Activated CD4-positive, alpha-beta memory T cell treated with anti-CD3 and anti-CD28 coated beads, Interleukin-2, amount 10 ng/mL, durations not matched to agents 7 days and 5 days (primary cell): ENCODE measurements at regions of chr3 and their contacts with region 1.

Region 1: DNA sequence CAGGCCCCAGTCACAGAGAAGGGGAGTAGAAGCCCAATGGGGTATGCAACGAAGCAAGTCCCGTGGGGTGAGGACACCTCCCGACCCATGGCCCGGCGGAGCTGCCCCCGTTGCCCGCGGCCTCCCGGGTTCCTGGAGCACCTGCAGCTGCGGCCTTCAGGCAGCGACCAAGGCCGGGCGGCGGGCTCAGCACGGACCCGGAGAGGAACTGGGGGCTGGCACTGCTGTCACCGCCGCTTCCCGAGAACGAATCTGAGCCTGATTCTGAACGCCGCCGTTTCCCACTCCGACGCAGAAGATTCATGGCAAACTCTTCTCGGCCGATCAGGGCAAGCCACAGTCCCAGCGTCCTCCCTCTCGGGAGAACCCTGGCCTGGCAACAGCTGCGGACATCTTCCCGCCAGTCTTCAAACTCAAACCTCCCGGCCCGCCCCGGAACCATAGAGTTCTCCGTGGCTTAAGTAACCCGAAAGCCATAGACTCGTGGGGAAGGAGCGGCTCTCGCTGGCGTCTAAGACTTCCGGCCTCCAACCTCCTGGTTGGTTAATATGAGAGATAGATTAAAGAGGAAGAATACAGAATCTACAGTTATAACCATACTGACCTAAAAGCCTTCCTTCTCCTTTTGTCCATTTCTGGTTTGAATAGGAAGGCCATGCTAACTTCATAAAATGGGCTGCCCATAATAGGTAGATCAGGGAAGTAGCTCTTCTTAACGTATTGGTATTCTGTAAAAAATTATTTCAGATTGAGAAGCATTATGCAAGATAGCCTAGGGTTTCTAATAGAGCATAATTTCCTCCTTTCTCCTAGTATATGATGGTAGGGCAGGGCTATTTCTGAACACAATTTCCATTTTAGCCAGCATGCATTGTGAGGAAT is at the start of gene POLQ:
- DNase-seq: peak; percentile 91
- H3K4me3 Mint-ChIP-seq: peak within 1 kb of the TSS; percentile 97
- H3K27ac Mint-ChIP-seq: peak within 1 kb of the TSS; percentile 86
- H3K4me1 Mint-ChIP-seq: peaks cover 44% of the 10 kb centered on the region
- H3K27me3 Mint-ChIP-seq: no peaks in the 10 kb centered on the region
- total RNA-seq, gene POLQ: 27.0 to 27.9 TPM

Region 2: DNA sequence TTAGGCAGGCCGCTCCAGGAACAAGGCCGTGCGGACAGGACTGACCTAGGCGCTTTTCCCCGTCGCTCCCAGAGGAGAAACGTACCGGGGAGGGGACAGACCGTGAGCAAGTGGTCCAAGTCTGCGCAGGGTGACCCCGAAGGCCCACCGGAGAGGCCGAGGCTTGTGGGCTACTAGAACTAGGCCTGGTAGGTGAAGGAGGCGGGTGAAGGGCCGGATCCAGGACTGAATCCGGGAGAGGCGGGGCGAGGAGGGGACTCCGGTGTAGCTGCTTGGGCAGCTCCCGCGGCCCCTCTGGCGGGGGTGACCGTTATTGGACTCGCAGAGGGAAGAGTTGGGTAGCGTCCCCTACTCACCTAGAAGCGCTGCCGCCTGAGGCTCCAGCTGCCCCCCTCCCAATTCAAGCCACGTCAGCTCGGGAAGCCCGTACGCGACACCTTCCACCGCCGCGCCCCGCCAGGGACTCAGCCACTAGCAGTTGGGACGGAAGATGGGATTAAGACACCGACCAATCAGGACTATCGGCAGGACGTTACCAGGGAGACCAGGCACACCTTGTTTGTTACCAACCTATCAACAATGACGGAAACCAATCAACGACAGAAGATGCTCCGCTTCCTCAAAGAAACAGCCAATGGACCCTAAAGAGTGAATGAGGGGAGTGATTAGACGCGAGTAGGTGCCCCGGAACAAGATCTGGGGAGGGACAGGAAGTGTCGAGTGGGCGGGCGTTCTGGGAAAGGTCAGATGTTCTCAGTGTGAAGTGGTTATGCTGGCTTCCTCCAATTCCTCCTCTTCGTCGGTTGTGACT is 203.7 kb after region 1 on chr3 and contains the start of gene GOLGB1:
- CTCF ChIA-PET with region 1: interaction called, 4 read pairs
- POLR2A ChIA-PET with region 1: interaction called, 14 read pairs
- DNase-seq: peak; percentile 96
- H3K4me3 Mint-ChIP-seq: no peak within 1 kb of the TSS
- H3K27ac Mint-ChIP-seq: no peak within 1 kb of the TSS
- H3K4me1 Mint-ChIP-seq: peaks cover 5% of the 10 kb centered on the region
- H3K27me3 Mint-ChIP-seq: peaks cover 11% of the 10 kb centered on the region
- total RNA-seq, gene GOLGB1: 33.6 to 37.8 TPM

Region 3: DNA sequence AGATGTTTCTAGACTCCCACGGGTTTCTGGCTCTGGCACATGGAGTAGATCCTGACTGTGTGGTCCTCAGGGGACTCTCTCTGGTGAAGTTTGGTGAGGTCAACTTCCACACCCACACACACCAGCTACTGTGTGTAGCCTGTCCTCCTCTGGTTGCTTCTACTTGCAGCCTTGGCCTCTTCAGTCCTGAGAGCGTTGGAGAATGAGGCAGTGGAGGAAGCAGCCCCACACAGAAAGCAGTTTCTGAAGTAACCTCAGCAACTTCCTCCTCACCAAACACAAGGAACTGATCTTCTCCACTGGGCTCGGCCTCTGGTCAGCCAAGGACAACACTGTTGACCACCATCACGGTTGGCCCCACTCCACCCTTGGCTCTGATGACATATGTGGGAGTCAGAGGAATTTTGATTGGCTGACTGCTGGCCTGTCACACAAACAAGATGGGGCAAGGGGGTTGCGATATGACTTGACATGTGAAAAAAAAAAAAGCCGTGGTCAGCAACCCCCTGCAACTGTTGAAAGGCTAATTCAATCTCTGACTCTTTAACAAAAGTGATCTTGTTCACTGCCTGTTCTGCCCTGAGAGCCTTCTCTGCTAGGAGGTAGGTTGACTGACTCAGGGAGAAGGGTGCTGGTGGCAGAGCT is 528.9 kb after region 1 on chr3:
- CTCF ChIA-PET with region 1: no interaction called
- POLR2A ChIA-PET with region 1: interaction called, 19 read pairs
- DNase-seq: peak; percentile 79
- H3K4me3 Mint-ChIP-seq: peak overlapping the region; percentile 84
- H3K27ac Mint-ChIP-seq: peak overlapping the region; percentile 95
- H3K4me1 Mint-ChIP-seq: peaks cover 64% of the 10 kb centered on the region
- H3K27me3 Mint-ChIP-seq: no peaks in the 10 kb centered on the region

Region 4: GRCh38 chr3:122101646-122102045 is 555.8 kb after region 1 on chr3:
- CTCF ChIA-PET with region 1: interaction called, 28 read pairs
- POLR2A ChIA-PET with region 1: interaction called, 26 read pairs
- DNase-seq: no peak
- H3K4me3 Mint-ChIP-seq: peak overlapping the region; percentile 25
- H3K27ac Mint-ChIP-seq: no peak overlapping the region
- H3K4me1 Mint-ChIP-seq: peaks cover 14% of the 10 kb centered on the region
- H3K27me3 Mint-ChIP-seq: no peaks in the 10 kb centered on the region

Region 5: DNA sequence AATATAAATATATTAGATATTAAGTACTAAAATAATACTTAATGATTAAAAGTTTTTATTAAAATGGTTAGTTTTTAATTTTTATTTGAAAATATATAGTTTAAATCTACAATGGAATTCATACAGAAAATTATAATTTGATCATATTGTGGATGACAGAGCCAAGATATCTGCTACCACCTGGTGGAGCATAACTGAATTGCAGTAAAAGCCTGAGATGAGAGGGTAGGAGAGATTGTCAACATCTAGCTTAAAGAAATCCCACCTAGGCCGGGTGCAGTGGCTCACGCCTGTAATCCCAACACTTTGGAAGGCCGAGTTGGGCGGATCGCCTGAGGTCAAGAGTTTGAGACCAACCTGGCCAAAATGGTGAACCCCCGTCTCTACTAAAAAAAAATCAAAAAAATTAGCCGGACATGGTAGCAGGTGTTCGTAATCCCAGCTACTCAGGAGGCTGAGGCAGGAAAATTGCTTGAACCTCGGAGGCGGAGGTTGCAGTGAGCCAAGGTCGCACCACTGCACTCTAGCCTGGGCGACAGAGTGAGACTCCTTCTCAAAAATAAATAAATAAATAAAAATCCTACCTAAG is 754.2 kb after region 1 on chr3:
- CTCF ChIA-PET with region 1: interaction called, 23 read pairs
- POLR2A ChIA-PET with region 1: interaction called, 3 read pairs
- DNase-seq: no peak
- H3K4me3 Mint-ChIP-seq: no peak overlapping the region
- H3K27ac Mint-ChIP-seq: no peak overlapping the region
- H3K4me1 Mint-ChIP-seq: peaks cover 18% of the 10 kb centered on the region
- H3K27me3 Mint-ChIP-seq: no peaks in the 10 kb centered on the region

Region 6: DNA sequence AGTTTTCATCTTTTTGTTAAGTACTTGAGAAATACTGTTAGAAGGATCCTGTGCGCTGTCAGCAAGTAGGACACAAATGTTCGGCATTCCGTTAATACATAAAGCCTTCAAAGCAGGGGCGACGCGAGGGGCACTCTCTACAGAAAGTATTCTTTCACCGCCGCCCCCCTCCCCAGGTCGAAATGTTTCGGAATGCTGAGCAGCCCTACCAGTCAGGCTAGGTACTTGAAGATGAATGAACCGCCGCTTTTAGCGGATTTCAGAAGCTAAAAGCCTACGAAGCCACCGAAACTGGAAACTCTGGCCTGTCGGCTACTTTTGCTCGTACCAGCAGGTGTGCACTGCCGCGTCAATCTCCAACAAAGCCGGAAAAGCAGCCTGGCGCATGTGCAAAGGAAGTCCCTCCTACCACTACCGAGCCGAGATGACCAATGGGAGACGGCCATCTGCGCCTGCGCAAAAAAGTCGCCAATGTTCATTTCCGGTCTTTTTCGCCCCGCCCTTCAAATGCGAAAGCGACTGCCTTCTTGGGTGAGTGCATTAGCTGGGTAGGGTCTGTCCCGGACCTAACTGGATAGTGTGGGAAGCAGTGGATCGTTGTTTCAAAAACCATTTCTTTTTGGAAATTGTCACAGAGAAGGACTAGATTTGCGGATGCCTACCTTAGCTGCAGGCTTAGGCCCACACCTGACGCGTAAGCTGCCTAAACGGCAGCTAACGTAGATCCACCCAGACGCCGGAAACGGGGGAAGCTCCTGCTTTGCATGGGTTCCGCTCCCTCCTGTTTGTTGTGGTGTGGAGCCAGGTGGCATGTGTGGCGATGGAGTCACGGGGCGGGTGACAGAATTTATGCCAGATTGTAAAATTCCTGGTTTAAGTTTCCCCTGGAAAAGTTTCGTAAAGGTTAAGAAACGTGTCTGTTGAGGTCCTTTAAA is 870.2 kb after region 1 on chr3 and contains the start of gene WDR5B:
- CTCF ChIA-PET with region 1: interaction called, 8 read pairs
- POLR2A ChIA-PET with region 1: interaction called, 12 read pairs
- DNase-seq: peak; percentile 99
- H3K4me3 Mint-ChIP-seq: peak within 1 kb of the TSS; percentile 86
- H3K27ac Mint-ChIP-seq: peak within 1 kb of the TSS; percentile 93
- H3K4me1 Mint-ChIP-seq: peaks cover 57% of the 10 kb centered on the region
- H3K27me3 Mint-ChIP-seq: no peaks in the 10 kb centered on the region
- total RNA-seq, gene WDR5B: 5.5 to 5.7 TPM

Region 7: GRCh38 chr3:122679085-122679881 is 1133.5 kb after region 1 on chr3:
- CTCF ChIA-PET with region 1: interaction called, 14 read pairs
- POLR2A ChIA-PET with region 1: interaction called, 9 read pairs
- DNase-seq: peak; percentile 88
- H3K4me3 Mint-ChIP-seq: peak overlapping the region; percentile 96
- H3K27ac Mint-ChIP-seq: peak overlapping the region; percentile 93
- H3K4me1 Mint-ChIP-seq: peaks cover 47% of the 10 kb centered on the region
- H3K27me3 Mint-ChIP-seq: no peaks in the 10 kb centered on the region